Sigmoid colon (tissue), 7 donors: ENCODE measurements at regions of chr9 and their contacts with region 1.

Region 1: GRCh38 chr9:84261082-84261746 is 79.3 kb downstream of the SLC28A3 start:
- DNase-seq: peak; percentile 86
- H3K4me3 ChIP-seq: peak overlapping the region; percentile 3 to 42 (median 34)
- H3K27ac ChIP-seq: no peak overlapping the region
- H3K4me1 ChIP-seq: no peaks in the 10 kb centered on the region
- H3K27me3 ChIP-seq: peaks cover 0 to 10% (median 0%) of the 10 kb centered on the region in 3 donors
- CTCF ChIP-seq: peak; percentile 68 to 90 (median 85)
- EP300 ChIP-seq: no peak
- POLR2A ChIP-seq: no peak

Region 2: DNA sequence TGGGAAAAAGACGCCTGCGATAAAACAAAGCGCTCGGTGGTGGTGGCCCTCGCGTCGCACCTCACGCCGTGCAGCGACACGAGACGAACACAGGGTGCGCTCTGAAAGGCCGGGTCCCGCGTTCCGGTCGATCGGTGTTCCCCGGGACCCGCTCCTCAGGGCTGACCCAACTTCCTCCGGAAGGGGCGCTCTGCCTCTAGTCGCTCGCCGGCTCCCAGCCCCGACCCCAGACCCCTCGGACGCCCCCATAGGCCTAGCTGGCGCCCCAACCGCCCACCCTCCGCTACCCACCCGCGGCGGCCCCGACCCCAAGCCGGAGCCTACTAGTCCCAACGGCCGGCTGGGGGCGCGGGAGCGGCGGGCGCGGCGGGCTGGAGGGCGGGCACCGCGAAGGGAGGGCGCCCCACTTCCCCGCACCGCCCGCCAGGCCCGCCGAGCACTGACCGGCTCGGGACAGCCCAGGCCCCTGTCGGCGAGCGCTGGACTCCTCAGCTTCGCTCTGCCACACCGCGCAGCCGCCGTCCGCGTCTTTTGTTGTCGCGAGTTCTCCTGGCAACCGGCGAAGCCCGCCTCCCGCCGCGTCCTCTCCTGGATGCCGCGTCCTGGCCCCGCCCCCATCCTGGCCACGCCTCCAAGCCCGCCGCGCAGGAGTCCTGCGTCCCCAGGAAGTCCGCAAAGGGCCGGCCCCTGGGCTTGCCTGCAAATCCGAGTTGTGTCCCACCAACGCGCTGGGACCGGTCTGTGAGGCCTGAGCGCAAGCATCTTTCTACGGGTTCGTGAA is 340.1 kb before region 1 on chr9 and contains the start of gene KIF27:
- intact Hi-C with region 1: loop called (anchors 1 kb)
- DNase-seq: peak; percentile 99
- H3K4me3 ChIP-seq: peak within 1 kb of the TSS; percentile 67 to 92 (median 82)
- H3K27ac ChIP-seq: peak within 1 kb of the TSS; percentile 92 to 99 (median 97)
- H3K4me1 ChIP-seq: peaks cover 0 to 9% (median 8%) of the 10 kb centered on the region in 4 donors
- H3K27me3 ChIP-seq: no peaks in the 10 kb centered on the region
- CTCF ChIP-seq: peak in 2 of 4 experiments; percentile 9 to 46
- EP300 ChIP-seq: no peak
- POLR2A ChIP-seq: peak; percentile 39 to 63
- total RNA-seq, gene KIF27: 3.2 to 7.8 (median 5.2) TPM